Caco-2 (cell line): ENCODE measurements at regions of chr7 and their contacts with region 1.

Region 1: DNA sequence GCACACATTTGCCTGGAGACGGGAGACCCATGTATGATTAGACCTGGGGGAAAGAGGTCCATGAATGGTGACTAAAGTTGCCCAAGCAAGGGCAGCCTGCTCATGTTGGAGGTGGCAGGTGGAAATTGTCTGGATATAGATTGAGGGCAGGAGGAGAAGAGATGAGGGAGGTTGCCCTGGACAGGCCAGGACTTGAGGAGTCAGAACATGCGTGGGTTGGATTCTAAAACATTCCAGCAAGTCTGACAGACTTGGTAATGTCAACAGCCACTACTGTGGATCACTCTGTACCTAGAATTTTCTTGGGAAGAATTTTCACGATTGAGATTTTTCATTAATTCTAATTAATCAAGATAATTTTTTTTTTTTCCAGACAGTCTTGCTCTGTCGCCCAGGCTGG is 19.1 kb upstream of the SVOPL start:
- DNase-seq: no peak
- H3K4me3 ChIP-seq: no peak overlapping the region
- H3K4me3 Mint-ChIP-seq: no peak overlapping the region
- H3K27ac Mint-ChIP-seq: no peak overlapping the region
- H3K4me1 ChIP-seq: no peaks in the 10 kb centered on the region
- H3K4me1 Mint-ChIP-seq: no peaks in the 10 kb centered on the region
- H3K27me3 ChIP-seq: no peaks in the 10 kb centered on the region
- H3K27me3 Mint-ChIP-seq: no peaks in the 10 kb centered on the region
- CTCF ChIP-seq: no peak

Region 2: GRCh38 chr7:138542183-138542582 is 178.1 kb before region 1 on chr7:
- CTCF ChIA-PET with region 1: no interaction called
- POLR2A ChIA-PET with region 1: interaction called, 11 read pairs
- intact Hi-C with region 1: no loop called
- DNase-seq: no peak
- H3K4me3 ChIP-seq: no peak overlapping the region
- H3K4me3 Mint-ChIP-seq: no peak overlapping the region
- H3K27ac Mint-ChIP-seq: no peak overlapping the region
- H3K4me1 ChIP-seq: no peaks in the 10 kb centered on the region
- H3K4me1 Mint-ChIP-seq: no peaks in the 10 kb centered on the region
- H3K27me3 ChIP-seq: no peaks in the 10 kb centered on the region
- H3K27me3 Mint-ChIP-seq: no peaks in the 10 kb centered on the region
- CTCF ChIP-seq: no peak

Region 3: GRCh38 chr7:138595454-138595853 is 124.8 kb before region 1 on chr7:
- CTCF ChIA-PET with region 1: no interaction called
- POLR2A ChIA-PET with region 1: no interaction called
- intact Hi-C with region 1: no loop called
- DNase-seq: no peak
- H3K4me3 ChIP-seq: no peak overlapping the region
- H3K4me3 Mint-ChIP-seq: no peak overlapping the region
- H3K27ac Mint-ChIP-seq: no peak overlapping the region
- H3K4me1 ChIP-seq: no peaks in the 10 kb centered on the region; the same call in 1 of the 2 replicates
- H3K4me1 Mint-ChIP-seq: no peaks in the 10 kb centered on the region
- H3K27me3 ChIP-seq: no peaks in the 10 kb centered on the region
- H3K27me3 Mint-ChIP-seq: no peaks in the 10 kb centered on the region
- CTCF ChIP-seq: no peak